HepG2 (cell line): ENCODE measurements at regions of chr1 and their contacts with region 1.

Region 1: GRCh38 chr1:3772027-3772714 is 378 bp upstream of the SMIM1 start:
- DNase-seq: peak; percentile 83
- ATAC-seq: peak; percentile 56
- H3K4me3 ChIP-seq: peak overlapping the region; percentile 89 to 90 (median 90)
- H3K27ac ChIP-seq: peak overlapping the region; percentile 86
- H3K4me1 ChIP-seq: peaks cover 70% of the 10 kb centered on the region
- H3K27me3 ChIP-seq: no peaks in the 10 kb centered on the region
- CTCF ChIP-seq: no peak
- EP300 ChIP-seq: no peak
- POLR2A ChIP-seq: no peak
- RAD21 ChIP-seq: no peak

Region 2: DNA sequence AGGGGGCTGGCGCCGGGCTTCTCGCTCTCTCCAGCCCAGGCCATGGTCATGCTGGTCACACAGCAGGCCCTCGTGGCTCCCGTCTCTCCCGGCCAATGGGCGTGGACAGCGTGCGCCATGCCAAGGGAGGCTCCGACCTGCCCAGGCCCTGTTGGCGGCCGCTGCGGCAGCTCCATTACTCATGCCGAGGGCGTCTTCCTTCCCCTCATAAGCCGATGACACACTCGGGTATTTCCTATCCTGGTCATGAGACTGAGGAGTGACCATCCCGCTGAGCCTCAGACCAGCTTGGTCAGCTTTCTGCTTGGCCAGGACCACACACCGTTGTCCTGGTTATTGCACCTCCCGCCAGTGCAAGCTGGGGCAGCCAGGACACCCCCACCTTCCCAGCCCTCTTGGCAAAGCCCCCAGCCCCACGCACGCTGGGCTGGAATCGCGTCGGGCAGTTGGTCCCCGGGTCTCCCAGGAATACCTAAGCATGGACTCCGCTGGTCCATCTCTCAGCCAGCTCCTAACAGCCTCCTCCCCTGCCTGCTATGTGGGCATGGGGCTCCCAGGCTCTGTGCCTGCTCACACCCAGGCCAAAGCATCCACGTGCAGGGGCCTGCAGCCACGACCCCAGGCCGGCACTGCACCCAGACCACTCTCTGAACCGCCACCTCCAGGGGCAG is 267.9 kb before region 1 on chr1:
- CTCF ChIA-PET with region 1: no interaction called
- POLR2A ChIA-PET with region 1: no interaction called
- in situ Hi-C with region 1: no loop called
- intact Hi-C with region 1: no loop called
- DNase-seq: no peak
- ATAC-seq: no peak
- H3K4me3 ChIP-seq: no peak overlapping the region
- H3K27ac ChIP-seq: no peak overlapping the region
- H3K4me1 ChIP-seq: no peaks in the 10 kb centered on the region
- H3K27me3 ChIP-seq: peaks cover 1 to 22% of the 10 kb centered on the region in 2 experiments; a peak in 3 of 5 replicates
- CTCF ChIP-seq: no peak
- EP300 ChIP-seq: no peak
- POLR2A ChIP-seq: no peak
- RAD21 ChIP-seq: no peak

Region 3: GRCh38 chr1:3733883-3734589 is 38.1 kb before region 1 on chr1:
- CTCF ChIA-PET with region 1: no interaction called
- POLR2A ChIA-PET with region 1: interaction called, 11 read pairs
- in situ Hi-C with region 1: no loop called
- intact Hi-C with region 1: no loop called
- DNase-seq: peak; percentile 27
- ATAC-seq: peak; percentile 28
- H3K4me3 ChIP-seq: peak overlapping the region in 1 of 3 experiments; percentile 43; a peak in 1 of 6 replicates
- H3K27ac ChIP-seq: peak overlapping the region; percentile 69
- H3K4me1 ChIP-seq: peaks cover 35% of the 10 kb centered on the region
- H3K27me3 ChIP-seq: no peaks in the 10 kb centered on the region
- CTCF ChIP-seq: no peak
- EP300 ChIP-seq: no peak
- POLR2A ChIP-seq: no peak
- RAD21 ChIP-seq: no peak

Region 4: GRCh38 chr1:3785456-3786157 is 13.4 kb after region 1 on chr1:
- CTCF ChIA-PET with region 1: interaction called, 3 read pairs
- POLR2A ChIA-PET with region 1: interaction called, 19 read pairs
- in situ Hi-C with region 1: no loop called
- intact Hi-C with region 1: no loop called
- DNase-seq: peak; percentile 60
- ATAC-seq: peak; percentile 78
- H3K4me3 ChIP-seq: no peak overlapping the region
- H3K27ac ChIP-seq: peak overlapping the region; percentile 47
- H3K4me1 ChIP-seq: peaks cover 25% of the 10 kb centered on the region
- H3K27me3 ChIP-seq: no peaks in the 10 kb centered on the region
- CTCF ChIP-seq: peak; percentile 91
- EP300 ChIP-seq: no peak
- POLR2A ChIP-seq: no peak
- RAD21 ChIP-seq: peak; percentile 54; the same call in 1 of the 2 replicates

Region 5: GRCh38 chr1:3796215-3797061 is 24.3 kb after region 1 on chr1 and contains the start of gene LRRC47:
- CTCF ChIA-PET with region 1: no interaction called
- POLR2A ChIA-PET with region 1: interaction called, 20 read pairs
- in situ Hi-C with region 1: no loop called
- intact Hi-C with region 1: loop called (anchors 1 kb)
- DNase-seq: peak; percentile 83
- ATAC-seq: peak; percentile 99
- H3K4me3 ChIP-seq: peak within 1 kb of the TSS; percentile 91 to 95 (median 92)
- H3K27ac ChIP-seq: peak within 1 kb of the TSS; percentile 77
- H3K4me1 ChIP-seq: peaks cover 39% of the 10 kb centered on the region
- H3K27me3 ChIP-seq: peaks cover 0 to 4% of the 10 kb centered on the region in 2 experiments; a peak in 2 of 5 replicates
- CTCF ChIP-seq: 0 out of 2 replicates have a peak, but pooled peaks have one; percentile 14
- EP300 ChIP-seq: no peak
- POLR2A ChIP-seq: peak; percentile 62 to 74
- RAD21 ChIP-seq: peak; percentile 31
- total RNA-seq, gene LRRC47: 52.4 and 52.5 TPM in 2 replicates

Region 6: DNA sequence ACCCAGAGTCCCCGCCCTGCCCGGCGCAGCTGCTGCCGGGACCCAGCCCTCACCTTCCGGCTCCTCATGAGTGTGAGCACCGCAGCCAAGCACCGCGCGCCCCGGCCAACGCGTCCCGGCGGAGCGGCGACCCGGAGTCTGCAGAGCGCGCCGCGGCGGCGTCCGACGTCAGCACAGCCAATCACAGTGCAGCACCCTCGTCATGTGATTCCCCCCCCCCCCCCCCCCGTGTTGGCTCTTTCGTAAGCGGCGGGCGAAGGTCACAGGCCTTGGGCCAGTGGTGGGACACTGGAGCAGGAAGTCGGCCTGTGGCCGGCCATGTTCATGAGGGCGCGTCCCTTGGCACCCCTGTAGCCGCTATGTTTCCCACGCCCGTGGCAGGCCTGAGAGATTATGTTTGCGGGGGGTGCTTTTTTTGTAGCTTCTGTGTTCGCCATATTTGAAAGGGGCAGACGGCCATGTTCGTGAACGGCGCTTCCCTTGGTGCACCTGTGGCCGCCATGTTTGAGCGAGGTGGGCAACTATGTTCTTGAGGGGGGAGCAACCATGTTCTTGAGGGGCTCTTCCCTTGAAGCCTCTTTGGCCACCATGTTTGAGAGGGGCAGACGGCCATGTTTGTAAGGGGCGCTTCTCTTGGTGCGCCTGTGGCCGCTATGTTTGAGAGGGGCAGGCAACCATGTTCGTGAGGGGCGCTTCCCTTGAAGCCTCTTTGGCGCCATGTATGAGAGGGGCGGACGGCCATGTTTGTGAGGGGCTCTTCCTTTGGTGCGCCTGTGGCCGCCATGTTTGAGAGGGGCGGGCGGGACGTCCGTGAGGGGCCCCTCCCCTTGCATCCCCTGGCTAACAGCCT is 128.2 kb after region 1 on chr1 and contains the start of gene C1orf174:
- CTCF ChIA-PET with region 1: no interaction called
- POLR2A ChIA-PET with region 1: interaction called, 5 read pairs
- in situ Hi-C with region 1: no loop called
- intact Hi-C with region 1: loop called (anchors 10 kb)
- DNase-seq: peak; percentile 97
- ATAC-seq: peak; percentile 78
- H3K4me3 ChIP-seq: peak within 1 kb of the TSS; percentile 85 to 97 (median 88)
- H3K27ac ChIP-seq: peak within 1 kb of the TSS; percentile 99
- H3K4me1 ChIP-seq: peaks cover 59% of the 10 kb centered on the region
- H3K27me3 ChIP-seq: no peaks in the 10 kb centered on the region; a peak in 1 of 5 replicates
- CTCF ChIP-seq: 0 out of 2 replicates have a peak, but pooled peaks have one; percentile 12
- EP300 ChIP-seq: peak; percentile 12 to 27; a peak in 1 of 4 replicates
- POLR2A ChIP-seq: peak in 1 of 2 experiments; percentile 85; a peak in 2 of 4 replicates
- RAD21 ChIP-seq: no peak
- total RNA-seq, gene C1orf174: 31.4 and 43.4 TPM in 2 replicates